CD4-positive, alpha-beta T cell (primary cell): ENCODE measurements at regions of chr20 and their contacts with region 1.

Region 1: GRCh38 chr20:33666293-33667244 is at the start of gene ACTL10:
- DNase-seq: peak; percentile 54 to 92 (median 69)
- ATAC-seq: peak; percentile 46
- H3K4me3 ChIP-seq: peak within 1 kb of the TSS; percentile 72
- H3K4me3 Mint-ChIP-seq: peak within 1 kb of the TSS; percentile 93
- H3K27ac ChIP-seq: peak within 1 kb of the TSS; percentile 63 to 69
- H3K27ac Mint-ChIP-seq: peak within 1 kb of the TSS; percentile 92
- H3K4me1 ChIP-seq: peaks cover 52% of the 10 kb centered on the region
- H3K4me1 Mint-ChIP-seq: peaks cover 35% of the 10 kb centered on the region
- H3K27me3 ChIP-seq: no peaks in the 10 kb centered on the region
- H3K27me3 Mint-ChIP-seq: no peaks in the 10 kb centered on the region
- CTCF ChIP-seq: no peak
- total RNA-seq, gene ACTL10: 0.28 to 0.55 TPM

Region 2: GRCh38 chr20:33401184-33401920 is 265.2 kb before region 1 on chr20 and contains the start of gene CDK5RAP1:
- CTCF ChIA-PET with region 1: interaction called, 4 read pairs
- POLR2A ChIA-PET with region 1: interaction called, 4 read pairs
- intact Hi-C with region 1: loop called in 1 of 2 experiments (anchors 5 kb)
- DNase-seq: peak; percentile 73 to 93 (median 78)
- ATAC-seq: peak; percentile 95
- H3K4me3 ChIP-seq: peak within 1 kb of the TSS; percentile 99
- H3K4me3 Mint-ChIP-seq: peak within 1 kb of the TSS; percentile 96
- H3K27ac ChIP-seq: peak within 1 kb of the TSS in 1 of 2 donors; percentile 24
- H3K27ac Mint-ChIP-seq: peak within 1 kb of the TSS; percentile 79
- H3K4me1 ChIP-seq: peaks cover 48% of the 10 kb centered on the region
- H3K4me1 Mint-ChIP-seq: peaks cover 64% of the 10 kb centered on the region
- H3K27me3 ChIP-seq: no peaks in the 10 kb centered on the region
- H3K27me3 Mint-ChIP-seq: no peaks in the 10 kb centered on the region
- CTCF ChIP-seq: no peak
- total RNA-seq, gene CDK5RAP1: 59.7 to 63.0 TPM

Region 3: GRCh38 chr20:33460711-33461110 is 205.9 kb before region 1 on chr20:
- CTCF ChIA-PET with region 1: interaction called, 30 read pairs
- POLR2A ChIA-PET with region 1: interaction called, 7 read pairs
- intact Hi-C with region 1: loop called (anchors 1 to 2 kb)
- DNase-seq: no peak
- ATAC-seq: no peak
- H3K4me3 ChIP-seq: no peak overlapping the region
- H3K4me3 Mint-ChIP-seq: no peak overlapping the region
- H3K27ac ChIP-seq: no peak overlapping the region
- H3K27ac Mint-ChIP-seq: no peak overlapping the region
- H3K4me1 ChIP-seq: no peaks in the 10 kb centered on the region
- H3K4me1 Mint-ChIP-seq: no peaks in the 10 kb centered on the region
- H3K27me3 ChIP-seq: no peaks in the 10 kb centered on the region
- H3K27me3 Mint-ChIP-seq: no peaks in the 10 kb centered on the region
- CTCF ChIP-seq: no peak

Region 4: DNA sequence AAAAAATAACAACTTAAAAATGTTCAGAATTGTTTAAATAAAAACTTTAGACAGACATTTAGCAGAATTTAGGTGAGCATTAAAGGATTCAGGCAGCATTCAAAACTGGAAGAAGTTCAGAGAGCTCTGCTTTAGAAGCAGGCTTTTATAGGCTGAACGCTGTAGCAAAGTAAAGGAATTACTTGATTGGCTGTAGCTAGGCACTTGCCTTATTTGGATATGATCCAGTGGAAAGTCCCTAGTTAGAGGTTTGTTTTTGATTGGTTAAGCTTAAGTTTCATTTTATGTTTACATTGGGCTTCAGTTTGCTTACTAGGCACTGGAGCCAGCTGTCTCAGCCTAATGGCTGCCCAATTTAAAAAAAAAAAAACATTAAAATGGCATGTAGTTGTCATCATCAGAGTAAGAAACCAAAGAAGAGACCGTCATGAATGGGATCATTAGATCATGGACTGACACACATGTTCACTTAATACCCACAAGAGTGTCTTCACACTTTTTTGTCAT is 111.6 kb before region 1 on chr20:
- CTCF ChIA-PET with region 1: interaction called, 4 read pairs
- POLR2A ChIA-PET with region 1: interaction called, 15 read pairs
- intact Hi-C with region 1: loop called in 1 of 2 experiments (anchors 5 kb)
- DNase-seq: peak in 12 of 14 experiments; percentile 4 to 96 (median 28)
- ATAC-seq: peak; percentile 94
- H3K4me3 ChIP-seq: peak overlapping the region; percentile 28
- H3K4me3 Mint-ChIP-seq: peak overlapping the region; percentile 66
- H3K27ac ChIP-seq: peak overlapping the region; percentile 81 to 88
- H3K27ac Mint-ChIP-seq: peak overlapping the region; percentile 95
- H3K4me1 ChIP-seq: peaks cover 17% of the 10 kb centered on the region
- H3K4me1 Mint-ChIP-seq: peaks cover 46% of the 10 kb centered on the region
- H3K27me3 ChIP-seq: no peaks in the 10 kb centered on the region
- H3K27me3 Mint-ChIP-seq: no peaks in the 10 kb centered on the region
- CTCF ChIP-seq: no peak

Region 5: GRCh38 chr20:33686100-33686983 is 19.8 kb after region 1 on chr20 and contains the start of gene E2F1:
- CTCF ChIA-PET with region 1: interaction called, 15 read pairs
- POLR2A ChIA-PET with region 1: interaction called, 45 read pairs
- intact Hi-C with region 1: no loop called
- DNase-seq: peak; percentile 81 to 97 (median 94)
- ATAC-seq: peak; percentile 94
- H3K4me3 ChIP-seq: peak within 1 kb of the TSS; percentile 47
- H3K4me3 Mint-ChIP-seq: peak within 1 kb of the TSS; percentile 89
- H3K27ac ChIP-seq: no peak within 1 kb of the TSS
- H3K27ac Mint-ChIP-seq: peak within 1 kb of the TSS; percentile 39
- H3K4me1 ChIP-seq: peaks cover 50% of the 10 kb centered on the region
- H3K4me1 Mint-ChIP-seq: peaks cover 50% of the 10 kb centered on the region
- H3K27me3 ChIP-seq: no peaks in the 10 kb centered on the region
- H3K27me3 Mint-ChIP-seq: no peaks in the 10 kb centered on the region
- CTCF ChIP-seq: peak; percentile 23
- total RNA-seq, gene E2F1: 1.2 to 1.6 TPM

Region 6: DNA sequence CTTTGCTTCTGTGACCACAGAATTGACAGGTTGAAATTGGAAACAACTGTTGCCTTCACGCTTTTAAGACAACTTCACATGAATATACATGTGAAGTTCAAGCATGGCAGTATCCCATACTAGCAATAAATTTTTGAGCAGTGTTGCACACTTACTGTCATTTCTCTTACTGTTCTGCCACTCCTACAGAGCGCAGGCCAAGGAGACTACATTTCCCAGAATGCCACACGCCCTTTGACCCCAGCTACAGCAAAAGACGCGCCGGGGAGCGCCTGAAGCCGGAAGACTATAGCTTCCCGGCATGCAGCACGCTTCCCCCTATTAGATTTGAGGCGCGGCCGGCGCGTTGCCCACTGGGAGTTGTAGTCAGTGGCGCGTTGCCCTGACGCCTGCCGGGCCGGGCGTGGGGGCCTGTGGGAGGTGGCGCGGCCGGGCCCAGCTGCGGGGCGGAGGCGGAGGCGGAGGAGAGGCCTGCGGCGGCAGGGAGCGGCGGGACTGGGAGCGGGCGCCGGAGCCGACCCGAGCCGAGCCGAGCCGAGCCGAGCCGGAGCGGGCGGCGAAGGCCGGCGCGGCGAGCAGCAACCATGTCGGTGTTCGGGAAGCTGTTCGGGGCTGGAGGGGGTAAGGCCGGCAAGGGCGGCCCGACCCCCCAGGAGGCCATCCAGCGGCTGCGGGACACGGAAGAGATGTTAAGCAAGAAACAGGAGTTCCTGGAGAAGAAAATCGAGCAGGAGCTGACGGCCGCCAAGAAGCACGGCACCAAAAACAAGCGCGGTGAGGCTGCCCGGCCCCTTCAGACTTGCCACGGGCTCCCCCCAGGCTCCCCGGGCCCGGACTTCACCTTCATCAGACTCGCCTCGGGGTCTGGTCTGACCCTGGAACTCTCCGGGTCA is 144.6 kb after region 1 on chr20 and contains the start of gene CHMP4B:
- CTCF ChIA-PET with region 1: no interaction called
- POLR2A ChIA-PET with region 1: no interaction called
- intact Hi-C with region 1: no loop called
- DNase-seq: peak; percentile 97 to 99 (median 98)
- ATAC-seq: peak; percentile 95
- H3K4me3 ChIP-seq: peak within 1 kb of the TSS; percentile 83
- H3K4me3 Mint-ChIP-seq: peak within 1 kb of the TSS; percentile 100
- H3K27ac ChIP-seq: peak within 1 kb of the TSS; percentile 38 to 66
- H3K27ac Mint-ChIP-seq: peak within 1 kb of the TSS; percentile 93
- H3K4me1 ChIP-seq: peaks cover 45% of the 10 kb centered on the region
- H3K4me1 Mint-ChIP-seq: peaks cover 49% of the 10 kb centered on the region
- H3K27me3 ChIP-seq: no peaks in the 10 kb centered on the region
- H3K27me3 Mint-ChIP-seq: no peaks in the 10 kb centered on the region
- CTCF ChIP-seq: no peak
- total RNA-seq, gene CHMP4B: 44.2 to 49.3 TPM

Region 7: DNA sequence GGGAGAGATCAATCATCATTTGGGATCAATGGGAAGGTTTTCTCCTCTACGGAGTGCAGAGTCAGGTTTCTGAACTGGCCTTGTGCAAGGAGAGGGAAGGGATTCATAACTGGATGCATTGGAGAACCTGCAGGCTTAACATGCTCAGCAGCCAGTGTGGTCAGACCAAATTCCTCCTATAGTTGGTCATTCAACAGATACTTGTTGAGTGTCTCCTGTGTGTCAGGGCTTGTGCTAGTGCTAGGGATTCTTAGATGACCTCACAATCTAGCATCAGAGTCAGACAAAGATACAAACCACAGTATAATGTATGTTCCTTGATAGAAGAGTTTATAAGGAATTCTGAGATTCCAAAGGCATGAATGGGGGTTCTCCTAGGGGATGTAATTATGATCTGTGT is 351.0 kb after region 1 on chr20:
- CTCF ChIA-PET with region 1: no interaction called
- POLR2A ChIA-PET with region 1: no interaction called
- intact Hi-C with region 1: no loop called
- DNase-seq: no peak
- ATAC-seq: no peak
- H3K4me3 ChIP-seq: no peak overlapping the region
- H3K4me3 Mint-ChIP-seq: no peak overlapping the region
- H3K27ac ChIP-seq: no peak overlapping the region
- H3K27ac Mint-ChIP-seq: peak overlapping the region; percentile 52
- H3K4me1 ChIP-seq: peaks cover 52% of the 10 kb centered on the region
- H3K4me1 Mint-ChIP-seq: peaks cover 92% of the 10 kb centered on the region
- H3K27me3 ChIP-seq: no peaks in the 10 kb centered on the region
- H3K27me3 Mint-ChIP-seq: no peaks in the 10 kb centered on the region
- CTCF ChIP-seq: no peak

Region 8: GRCh38 chr20:34111702-34112599 is 445.4 kb after region 1 on chr20 and contains the start of gene EIF2S2:
- CTCF ChIA-PET with region 1: no interaction called
- POLR2A ChIA-PET with region 1: interaction called, 10 read pairs
- intact Hi-C with region 1: no loop called
- DNase-seq: peak; percentile 91 to 100 (median 96)
- ATAC-seq: peak; percentile 87
- H3K4me3 ChIP-seq: peak within 1 kb of the TSS; percentile 93
- H3K4me3 Mint-ChIP-seq: peak within 1 kb of the TSS; percentile 96
- H3K27ac ChIP-seq: peak within 1 kb of the TSS; percentile 92
- H3K27ac Mint-ChIP-seq: peak within 1 kb of the TSS; percentile 95
- H3K4me1 ChIP-seq: peaks cover 37% of the 10 kb centered on the region
- H3K4me1 Mint-ChIP-seq: peaks cover 48% of the 10 kb centered on the region
- H3K27me3 ChIP-seq: no peaks in the 10 kb centered on the region
- H3K27me3 Mint-ChIP-seq: no peaks in the 10 kb centered on the region
- CTCF ChIP-seq: no peak
- total RNA-seq, gene EIF2S2: 21.8 to 23.2 TPM